GM12878 (cell line): ENCODE measurements at regions of chr17 and their contacts with region 1.

Region 1: DNA sequence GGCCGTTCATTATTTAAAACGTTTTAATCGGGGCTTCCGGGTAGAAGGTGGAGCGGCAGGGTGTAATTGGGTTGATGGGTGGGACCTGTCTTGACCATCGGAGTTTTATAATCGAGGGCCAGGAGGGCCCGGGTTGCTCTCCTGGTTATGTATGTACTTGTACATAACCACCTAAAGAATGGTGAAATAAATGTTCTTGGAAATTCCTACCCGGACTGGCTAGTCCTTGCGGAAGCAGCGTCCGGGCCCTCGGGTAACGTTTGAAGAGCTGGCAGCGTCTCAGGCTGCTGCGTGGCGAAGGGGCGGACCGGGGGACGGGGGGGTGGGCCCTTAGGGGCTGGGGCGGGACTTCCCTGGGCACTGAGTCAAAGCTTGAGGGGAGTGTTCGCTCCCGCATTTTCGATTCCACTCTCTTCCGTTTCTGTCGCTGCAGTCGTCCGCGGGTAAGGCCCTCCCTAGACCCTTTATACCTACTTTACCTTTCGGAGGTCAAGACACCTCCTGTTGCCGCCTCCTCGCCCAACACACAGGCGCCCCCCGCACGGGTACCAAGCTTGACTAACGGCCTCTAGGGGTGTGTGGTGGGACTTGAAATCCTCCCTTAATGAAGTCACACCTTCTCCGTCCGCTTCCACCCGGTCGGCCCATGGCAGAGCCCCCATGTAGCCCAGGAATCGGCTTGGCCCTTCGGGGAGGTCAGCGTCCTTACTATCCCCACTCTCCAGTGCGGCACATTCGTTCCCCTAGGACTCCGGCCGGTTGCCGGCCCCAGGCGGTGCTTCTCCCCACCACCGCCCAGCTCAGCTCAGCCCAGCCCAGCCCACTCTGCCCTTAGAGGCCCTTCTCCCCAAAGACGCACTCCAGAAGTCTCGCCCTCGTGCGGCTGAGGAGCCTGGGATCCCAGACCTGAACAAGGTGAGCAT is at the start of gene TMEM106A:
- DNase-seq: peak; percentile 59
- ATAC-seq: peak; percentile 90
- H3K4me3 ChIP-seq: peak within 1 kb of the TSS; percentile 75
- H3K27ac ChIP-seq: peak within 1 kb of the TSS; percentile 88
- H3K4me1 ChIP-seq: peaks cover 10% of the 10 kb centered on the region
- H3K27me3 ChIP-seq: no peaks in the 10 kb centered on the region
- CTCF ChIP-seq: peak; percentile 29 to 45 (median 44); a peak in 3 of 6 replicates
- EP300 ChIP-seq: no peak
- POLR2A ChIP-seq: peak; percentile 79
- RAD21 ChIP-seq: 0 out of 2 replicates have a peak, but pooled peaks have one; percentile 4
- polyA plus RNA-seq, gene TMEM106A: 2.3 to 2.6 TPM

Region 2: GRCh38 chr17:41688699-41689496 is 1522.8 kb before region 1 on chr17 and contains the start of gene EIF1:
- CTCF ChIA-PET with region 1: no interaction called
- POLR2A ChIA-PET with region 1: no interaction called
- RAD21 ChIA-PET with region 1: no interaction called
- SMC1A ChIA-PET with region 1: no interaction called
- in situ Hi-C with region 1: loop called (anchors 25 kb)
- intact Hi-C with region 1: no loop called
- DNase-seq: peak; percentile 98
- ATAC-seq: peak; percentile 85
- H3K4me3 ChIP-seq: peak within 1 kb of the TSS; percentile 87
- H3K27ac ChIP-seq: peak within 1 kb of the TSS; percentile 100
- H3K4me1 ChIP-seq: peaks cover 11% of the 10 kb centered on the region
- H3K27me3 ChIP-seq: no peaks in the 10 kb centered on the region
- CTCF ChIP-seq: no peak
- EP300 ChIP-seq: 0 out of 4 replicates have a peak, but pooled peaks of 1 of the 2 experiments have one; percentile 17
- POLR2A ChIP-seq: peak; percentile 98
- RAD21 ChIP-seq: no peak
- polyA plus RNA-seq, gene EIF1: 670 to 687 TPM

Region 3: GRCh38 chr17:42609182-42609813 is 602.4 kb before region 1 on chr17 and contains the starts of genes RETREG3 and TUBG1:
- CTCF ChIA-PET with region 1: no interaction called
- POLR2A ChIA-PET with region 1: no interaction called
- RAD21 ChIA-PET with region 1: no interaction called
- SMC1A ChIA-PET with region 1: no interaction called
- in situ Hi-C with region 1: loop called (anchors 25 kb)
- intact Hi-C with region 1: no loop called
- DNase-seq: peak; percentile 98
- ATAC-seq: peak; percentile 90
- H3K4me3 ChIP-seq: peak within 1 kb of the TSS; percentile 98
- H3K27ac ChIP-seq: peak within 1 kb of the TSS; percentile 90
- H3K4me1 ChIP-seq: no peaks in the 10 kb centered on the region; the same call in 1 of the 2 replicates
- H3K27me3 ChIP-seq: no peaks in the 10 kb centered on the region
- CTCF ChIP-seq: peak; percentile 16 to 24 (median 20); a peak in 2 of 6 replicates
- EP300 ChIP-seq: no peak
- POLR2A ChIP-seq: peak; percentile 91
- RAD21 ChIP-seq: no peak
- polyA plus RNA-seq, gene RETREG3: 7.0 to 9.0 TPM
- polyA plus RNA-seq, gene TUBG1: 40.0 to 40.3 TPM

Region 4: DNA sequence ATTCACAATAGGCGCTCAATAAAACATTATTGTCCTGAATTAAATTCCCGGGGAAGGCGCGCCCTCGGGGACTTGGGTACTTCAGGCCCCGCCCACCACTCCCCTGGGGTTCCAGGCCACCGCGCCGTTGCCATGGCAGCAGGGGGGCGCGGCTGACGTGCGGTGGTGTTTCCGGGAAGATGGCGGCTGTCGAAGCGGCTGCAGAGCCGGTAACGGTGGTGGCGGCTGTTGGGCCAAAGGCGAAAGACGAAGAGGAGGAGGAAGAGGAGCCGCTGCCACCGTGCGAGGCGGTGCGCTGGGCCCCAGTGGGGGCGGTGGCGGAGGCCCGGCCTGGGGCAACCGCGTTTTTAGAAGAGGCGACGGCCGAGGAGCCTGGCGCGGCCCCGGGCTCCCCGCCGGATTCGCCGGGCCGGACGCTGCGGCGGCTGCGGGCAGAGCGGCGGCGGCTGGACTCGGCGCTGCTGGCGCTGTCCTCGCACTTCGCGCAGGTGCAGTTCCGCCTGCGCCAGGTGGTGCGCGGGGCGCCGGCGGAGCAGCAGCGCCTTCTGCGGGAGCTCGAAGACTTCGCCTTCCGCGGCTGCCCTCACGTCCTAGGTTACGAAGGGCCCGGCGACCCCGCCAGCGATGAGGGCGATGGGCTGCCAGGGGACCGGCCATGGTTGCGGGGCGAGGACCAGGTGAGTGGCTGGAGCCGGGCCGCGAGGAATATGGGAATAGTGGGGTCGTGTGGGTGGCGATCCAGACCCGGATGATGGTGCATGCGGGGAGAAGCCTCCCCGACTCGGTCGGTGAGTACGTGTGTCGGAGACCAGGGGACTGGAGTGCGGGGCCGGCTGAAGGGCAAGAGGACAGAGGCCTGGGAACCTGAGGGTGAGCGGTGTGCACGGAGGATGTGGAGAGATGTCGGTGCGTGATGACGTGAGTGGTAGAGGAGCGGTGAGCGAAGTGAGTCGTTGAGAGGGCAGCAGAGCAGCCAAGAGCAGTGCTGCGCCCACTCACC is 231.0 kb before region 1 on chr17 and contains the start of gene RUNDC1:
- CTCF ChIA-PET with region 1: no interaction called
- POLR2A ChIA-PET with region 1: no interaction called
- RAD21 ChIA-PET with region 1: no interaction called
- SMC1A ChIA-PET with region 1: no interaction called
- in situ Hi-C with region 1: no loop called
- intact Hi-C with region 1: no loop called
- DNase-seq: peak; percentile 51
- ATAC-seq: peak; percentile 84
- H3K4me3 ChIP-seq: peak within 1 kb of the TSS; percentile 94
- H3K27ac ChIP-seq: peak within 1 kb of the TSS; percentile 85
- H3K4me1 ChIP-seq: peaks cover 14% of the 10 kb centered on the region
- H3K27me3 ChIP-seq: no peaks in the 10 kb centered on the region
- CTCF ChIP-seq: peak in 2 of 3 experiments; percentile 21 to 38; a peak in 2 of 6 replicates
- EP300 ChIP-seq: no peak
- POLR2A ChIP-seq: peak; percentile 78
- RAD21 ChIP-seq: no peak
- polyA plus RNA-seq, gene RUNDC1: 2.9 to 3.0 TPM

Region 5: GRCh38 chr17:43094129-43094835 is 117.5 kb before region 1 on chr17:
- CTCF ChIA-PET with region 1: no interaction called
- POLR2A ChIA-PET with region 1: no interaction called
- RAD21 ChIA-PET with region 1: no interaction called
- SMC1A ChIA-PET with region 1: no interaction called
- in situ Hi-C with region 1: no loop called
- intact Hi-C with region 1: no loop called
- DNase-seq: no peak
- ATAC-seq: no peak
- H3K4me3 ChIP-seq: no peak overlapping the region
- H3K27ac ChIP-seq: no peak overlapping the region
- H3K4me1 ChIP-seq: no peaks in the 10 kb centered on the region
- H3K27me3 ChIP-seq: no peaks in the 10 kb centered on the region
- CTCF ChIP-seq: no peak
- EP300 ChIP-seq: no peak
- POLR2A ChIP-seq: no peak
- RAD21 ChIP-seq: no peak

Region 6: DNA sequence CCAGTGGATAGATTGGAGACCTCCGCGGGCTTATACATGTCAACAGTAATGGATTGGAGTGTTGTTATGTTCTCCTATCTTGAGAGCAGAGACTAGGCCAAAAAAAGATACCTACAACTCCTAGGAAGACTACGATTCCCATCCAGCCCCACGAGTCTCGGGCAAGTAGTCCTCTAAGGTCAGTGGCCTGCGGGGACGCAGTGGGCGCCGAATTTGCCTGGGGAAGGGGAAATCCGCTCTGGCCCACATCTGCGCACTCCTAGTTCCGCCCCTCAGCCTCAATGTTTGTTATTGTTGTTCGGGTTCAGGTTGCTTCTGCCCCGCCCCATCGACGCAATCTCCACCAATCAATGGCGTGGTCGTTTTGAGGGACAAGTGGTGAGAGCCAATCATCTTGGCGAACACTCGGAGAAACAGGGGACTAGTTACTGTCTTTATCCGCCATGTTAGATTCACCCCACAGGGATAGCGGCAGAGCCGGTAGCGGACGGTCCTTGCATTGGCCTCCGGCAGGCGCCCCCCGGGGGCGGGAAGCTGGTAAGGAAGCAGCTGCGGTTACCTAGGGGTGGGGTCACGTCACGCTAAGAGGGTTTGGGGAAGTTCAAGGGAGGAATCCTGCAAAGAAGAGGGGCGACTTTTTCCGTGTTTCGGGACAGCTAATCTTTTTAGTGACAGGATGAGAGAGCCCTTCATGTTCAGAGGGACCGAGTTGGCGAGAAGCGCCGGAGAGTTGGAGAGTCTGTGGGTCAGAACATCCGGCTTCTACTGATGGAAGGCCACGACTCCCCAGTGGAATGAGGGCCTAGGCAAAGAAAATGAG is 40.8 kb before region 1 on chr17 and contains the start of gene NBR1:
- CTCF ChIA-PET with region 1: interaction called, 5 read pairs
- POLR2A ChIA-PET with region 1: interaction called, 17 read pairs
- RAD21 ChIA-PET with region 1: interaction called, 15 read pairs
- SMC1A ChIA-PET with region 1: interaction called, 10 read pairs
- in situ Hi-C with region 1: loop called (anchors 5 kb)
- intact Hi-C with region 1: no loop called
- DNase-seq: peak; percentile 100
- ATAC-seq: peak; percentile 88
- H3K4me3 ChIP-seq: peak within 1 kb of the TSS; percentile 78
- H3K27ac ChIP-seq: peak within 1 kb of the TSS; percentile 96
- H3K4me1 ChIP-seq: no peaks in the 10 kb centered on the region
- H3K27me3 ChIP-seq: no peaks in the 10 kb centered on the region
- CTCF ChIP-seq: peak in 2 of 3 experiments; percentile 21 to 27; a peak in 2 of 6 replicates
- EP300 ChIP-seq: no peak
- POLR2A ChIP-seq: peak; percentile 90
- RAD21 ChIP-seq: peak; percentile 6; the same call in 1 of the 2 replicates
- polyA plus RNA-seq, gene NBR1: 3.5 to 6.2 TPM

Region 7: DNA sequence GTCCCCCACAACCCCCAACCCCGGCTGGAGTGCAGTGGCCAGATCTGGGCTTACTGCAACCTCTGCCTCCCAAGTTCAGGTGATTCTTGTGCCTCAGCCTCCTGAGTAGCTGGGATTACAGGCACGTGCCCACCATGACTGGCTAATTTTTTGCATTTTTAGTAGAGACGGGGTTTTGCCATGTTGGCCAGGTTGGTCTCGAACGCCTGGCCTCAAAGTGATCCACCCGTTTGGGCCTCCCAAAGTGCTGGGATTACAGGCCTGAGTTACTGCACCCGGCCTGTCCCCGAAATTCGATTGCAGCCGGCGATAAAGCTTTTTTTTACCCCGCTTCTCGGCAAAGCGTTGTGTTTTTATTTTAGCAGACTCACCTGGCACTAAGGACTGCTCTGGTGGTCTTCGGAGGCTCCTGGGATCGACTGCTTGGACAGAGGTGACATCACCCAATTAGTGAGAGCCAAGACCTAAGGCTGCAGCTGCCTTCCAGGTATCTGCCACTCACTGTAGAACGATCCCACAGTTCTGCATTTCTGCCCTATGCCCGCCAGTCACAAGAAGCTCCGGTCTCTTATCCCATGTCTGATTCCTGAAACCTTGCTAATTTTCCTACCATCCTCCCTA is 104.9 kb after region 1 on chr17:
- CTCF ChIA-PET with region 1: interaction called, 6 read pairs
- POLR2A ChIA-PET with region 1: interaction called, 31 read pairs
- RAD21 ChIA-PET with region 1: interaction called, 15 read pairs
- SMC1A ChIA-PET with region 1: interaction called, 12 read pairs
- in situ Hi-C with region 1: loop called (anchors 10 kb)
- intact Hi-C with region 1: no loop called
- DNase-seq: no peak
- ATAC-seq: no peak
- H3K4me3 ChIP-seq: no peak overlapping the region
- H3K27ac ChIP-seq: no peak overlapping the region
- H3K4me1 ChIP-seq: peaks cover 5% of the 10 kb centered on the region; the same call in 1 of the 2 replicates
- H3K27me3 ChIP-seq: no peaks in the 10 kb centered on the region
- CTCF ChIP-seq: no peak
- EP300 ChIP-seq: no peak
- POLR2A ChIP-seq: no peak
- RAD21 ChIP-seq: no peak

Region 8: GRCh38 chr17:43381204-43381603 is 169.5 kb after region 1 on chr17:
- CTCF ChIA-PET with region 1: no interaction called
- POLR2A ChIA-PET with region 1: no interaction called
- RAD21 ChIA-PET with region 1: no interaction called
- SMC1A ChIA-PET with region 1: no interaction called
- in situ Hi-C with region 1: no loop called
- intact Hi-C with region 1: no loop called
- DNase-seq: no peak
- ATAC-seq: no peak
- H3K4me3 ChIP-seq: no peak overlapping the region
- H3K27ac ChIP-seq: no peak overlapping the region
- H3K4me1 ChIP-seq: no peaks in the 10 kb centered on the region
- H3K27me3 ChIP-seq: no peaks in the 10 kb centered on the region
- CTCF ChIP-seq: no peak
- EP300 ChIP-seq: no peak
- POLR2A ChIP-seq: no peak
- RAD21 ChIP-seq: no peak

Region 9: DNA sequence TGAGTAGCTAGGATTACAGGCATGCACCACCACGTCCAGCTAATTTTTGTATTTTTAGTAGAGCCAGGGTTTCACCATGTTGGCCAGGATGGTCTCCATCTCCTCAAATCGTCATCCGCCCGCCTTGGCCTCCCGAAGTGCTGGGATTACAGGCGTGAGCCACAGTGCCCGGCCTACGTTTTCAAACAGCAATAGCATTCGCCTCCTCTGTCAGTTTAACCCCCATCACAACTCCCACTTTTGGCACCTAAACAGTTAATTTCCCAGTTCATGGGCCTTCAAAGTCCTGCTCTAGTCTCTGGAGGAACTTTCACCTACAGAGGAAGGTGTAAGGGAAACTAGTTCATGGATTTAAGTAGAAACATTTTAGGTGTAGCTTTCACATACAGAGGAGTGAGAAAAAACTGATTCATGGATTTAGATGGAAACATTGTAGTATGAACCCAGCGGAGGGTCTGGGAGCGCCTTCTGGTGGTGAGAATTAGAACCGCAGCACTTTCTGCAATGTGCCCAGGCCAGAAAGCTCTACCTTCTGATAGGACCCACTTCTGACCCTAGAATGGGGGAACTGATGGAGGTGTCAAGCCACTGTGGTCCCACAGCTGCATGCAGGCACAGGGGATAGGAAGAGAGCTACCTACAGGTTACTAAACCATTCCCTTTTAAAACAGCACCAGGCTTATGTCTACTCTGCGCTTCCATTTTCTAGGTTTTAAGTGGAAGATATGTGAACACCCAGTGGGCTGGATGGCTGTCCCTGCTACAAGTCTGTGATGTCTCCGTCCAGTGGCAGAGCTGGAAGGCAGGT is 462.0 kb after region 1 on chr17:
- CTCF ChIA-PET with region 1: no interaction called
- POLR2A ChIA-PET with region 1: no interaction called
- RAD21 ChIA-PET with region 1: no interaction called
- SMC1A ChIA-PET with region 1: no interaction called
- in situ Hi-C with region 1: loop called (anchors 25 kb)
- intact Hi-C with region 1: no loop called
- DNase-seq: no peak
- ATAC-seq: peak; percentile 48
- H3K4me3 ChIP-seq: no peak overlapping the region
- H3K27ac ChIP-seq: no peak overlapping the region
- H3K4me1 ChIP-seq: peaks cover 42% of the 10 kb centered on the region
- H3K27me3 ChIP-seq: no peaks in the 10 kb centered on the region
- CTCF ChIP-seq: peak; percentile 92 to 97 (median 94)
- EP300 ChIP-seq: no peak
- POLR2A ChIP-seq: no peak
- RAD21 ChIP-seq: peak; percentile 76

Region 10: DNA sequence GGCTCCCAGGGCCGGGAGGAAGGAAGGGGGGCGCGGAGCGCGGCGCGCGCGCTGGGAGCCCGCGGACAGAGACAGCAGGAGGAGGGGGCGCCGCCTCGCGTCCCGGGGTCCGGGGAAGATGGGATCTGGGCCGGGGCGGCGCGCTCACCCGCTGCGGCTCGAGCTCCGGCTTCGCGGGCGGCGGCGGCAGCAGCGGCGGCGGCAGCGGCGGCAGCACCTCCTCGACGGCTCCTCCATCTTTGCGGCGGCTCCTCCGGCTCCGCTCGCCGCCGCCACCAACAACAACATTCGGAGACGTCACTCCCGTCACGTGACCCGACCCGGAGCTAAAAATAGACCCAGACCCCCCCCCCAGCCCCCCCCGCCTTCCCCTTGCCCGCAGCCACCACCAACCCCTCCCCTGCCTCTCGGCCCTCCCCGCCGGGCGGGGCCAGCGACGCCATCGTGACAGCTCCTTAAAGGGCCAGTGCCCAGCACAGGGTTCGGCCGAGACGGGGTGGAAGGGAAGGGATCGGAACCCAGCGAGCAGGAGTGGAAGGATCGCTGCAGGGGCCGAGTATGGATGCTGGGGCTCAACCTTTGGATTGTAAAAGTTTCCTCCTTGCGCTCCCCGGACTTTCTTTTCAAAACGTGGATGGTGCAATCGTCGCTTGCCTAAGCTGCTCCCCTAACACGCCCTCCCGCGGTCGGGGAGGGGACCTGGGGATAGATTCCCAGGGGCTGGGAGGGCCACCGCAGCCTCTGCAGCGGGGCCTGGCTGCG is 911.8 kb after region 1 on chr17 and contains the start of gene HDAC5:
- CTCF ChIA-PET with region 1: no interaction called
- POLR2A ChIA-PET with region 1: no interaction called
- RAD21 ChIA-PET with region 1: no interaction called
- SMC1A ChIA-PET with region 1: no interaction called
- in situ Hi-C with region 1: loop called (anchors 25 kb)
- intact Hi-C with region 1: no loop called
- DNase-seq: peak; percentile 73
- ATAC-seq: peak; percentile 97
- H3K4me3 ChIP-seq: peak within 1 kb of the TSS; percentile 95
- H3K27ac ChIP-seq: peak within 1 kb of the TSS; percentile 59
- H3K4me1 ChIP-seq: peaks cover 8% of the 10 kb centered on the region; the same call in 1 of the 2 replicates
- H3K27me3 ChIP-seq: no peaks in the 10 kb centered on the region
- CTCF ChIP-seq: peak; percentile 53 to 69 (median 67)
- EP300 ChIP-seq: no peak
- POLR2A ChIP-seq: peak; percentile 71
- RAD21 ChIP-seq: peak; percentile 38; the same call in 1 of the 2 replicates
- polyA plus RNA-seq, gene HDAC5: 1.1 to 2.0 TPM